Activated naive CD4-positive, alpha-beta T cell treated with anti-CD3 and anti-CD28 coated beads for 36 hours (primary cell): ENCODE measurements at regions of chr3 and their contacts with region 1.

Region 1: GRCh38 chr3:32349184-32349583 is 42.5 kb upstream of the CMTM7 start:
- DNase-seq: no peak
- H3K4me3 Mint-ChIP-seq: no peak overlapping the region
- H3K27ac Mint-ChIP-seq: no peak overlapping the region
- H3K4me1 Mint-ChIP-seq: peaks cover 17% of the 10 kb centered on the region
- H3K27me3 Mint-ChIP-seq: no peaks in the 10 kb centered on the region

Region 2: DNA sequence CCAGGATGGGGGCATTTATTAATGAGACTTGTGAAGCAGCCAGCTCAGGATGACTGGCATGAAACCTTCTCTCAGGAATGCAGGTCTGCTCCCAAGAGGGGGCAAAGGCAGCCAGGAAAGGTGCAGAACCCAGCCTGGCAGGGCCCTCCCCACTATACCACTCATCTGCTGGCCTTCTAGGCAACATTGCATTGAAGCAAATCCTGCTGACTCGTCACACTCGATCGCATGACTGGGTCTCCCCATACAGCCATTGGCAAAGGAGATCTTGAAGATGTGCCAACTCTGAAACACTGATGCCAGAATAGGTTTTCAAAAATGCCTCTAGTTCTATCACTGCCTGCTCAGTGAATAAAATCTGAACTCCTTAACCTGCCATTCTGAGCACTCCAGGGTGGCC is 23.2 kb before region 1 on chr3:
- CTCF ChIA-PET with region 1: no interaction called
- intact Hi-C with region 1: loop called (anchors 1 kb)
- DNase-seq: no peak
- H3K4me3 Mint-ChIP-seq: no peak overlapping the region
- H3K27ac Mint-ChIP-seq: no peak overlapping the region
- H3K4me1 Mint-ChIP-seq: peaks cover 9% of the 10 kb centered on the region
- H3K27me3 Mint-ChIP-seq: no peaks in the 10 kb centered on the region